Posterior vena cava (tissue), 2 donors: ENCODE measurements at regions of chr3 and their contacts with region 1.

Region 1: DNA sequence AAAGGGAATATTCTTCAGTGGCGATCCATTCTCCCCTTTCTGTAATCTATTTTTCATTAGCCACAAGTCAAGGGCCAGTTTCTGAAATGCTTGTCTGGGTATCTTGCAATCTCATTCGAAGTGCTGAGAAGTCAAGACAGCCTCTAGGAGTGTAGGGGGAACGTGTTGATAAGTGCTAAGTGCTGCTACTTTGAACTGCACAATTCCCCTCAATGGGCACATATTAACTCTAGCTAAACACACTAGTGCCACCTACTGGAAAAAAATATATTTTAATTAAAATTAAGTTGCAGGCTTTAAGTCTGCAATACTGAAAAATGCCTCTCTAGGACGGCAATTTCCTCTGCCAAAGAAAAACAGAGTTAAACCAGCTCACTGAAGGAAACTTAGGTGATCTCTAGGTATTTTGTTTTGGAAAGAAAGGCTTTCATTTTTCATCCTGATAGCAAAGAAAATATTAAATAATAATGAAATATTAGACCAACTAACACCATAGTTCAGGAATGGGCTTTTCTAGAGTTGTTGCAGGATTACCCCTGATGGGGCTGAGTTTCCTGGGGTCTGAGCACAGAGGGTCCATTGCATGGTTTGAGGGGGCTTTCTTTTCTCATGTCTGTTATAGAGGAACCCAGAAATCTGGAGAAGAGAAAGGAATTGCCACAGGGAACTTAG is 181.9 kb upstream of the KBTBD8 start:
- DNase-seq: no peak

Region 2: DNA sequence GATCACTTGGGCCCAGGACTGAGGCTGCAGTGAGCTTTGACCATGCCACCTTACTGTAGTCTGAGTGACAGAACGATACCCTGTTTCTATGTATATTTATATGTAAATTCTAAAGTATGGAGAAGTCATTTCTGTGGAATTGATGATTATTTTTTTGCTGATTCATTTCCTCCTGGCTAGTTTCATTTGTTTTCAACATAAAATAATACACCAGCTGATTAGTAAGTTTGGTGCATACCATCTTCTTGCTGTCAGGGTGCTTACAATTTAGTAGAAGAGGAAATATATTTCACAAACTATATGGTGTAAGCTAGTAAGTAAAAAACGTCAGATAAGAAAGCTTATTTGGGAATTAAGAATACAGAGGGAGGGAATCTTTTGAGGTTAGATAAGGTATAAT is 559.4 kb before region 1 on chr3:
- intact Hi-C with region 1: loop called in 1 of 2 experiments (anchors 5 kb)
- DNase-seq: no peak

Region 3: DNA sequence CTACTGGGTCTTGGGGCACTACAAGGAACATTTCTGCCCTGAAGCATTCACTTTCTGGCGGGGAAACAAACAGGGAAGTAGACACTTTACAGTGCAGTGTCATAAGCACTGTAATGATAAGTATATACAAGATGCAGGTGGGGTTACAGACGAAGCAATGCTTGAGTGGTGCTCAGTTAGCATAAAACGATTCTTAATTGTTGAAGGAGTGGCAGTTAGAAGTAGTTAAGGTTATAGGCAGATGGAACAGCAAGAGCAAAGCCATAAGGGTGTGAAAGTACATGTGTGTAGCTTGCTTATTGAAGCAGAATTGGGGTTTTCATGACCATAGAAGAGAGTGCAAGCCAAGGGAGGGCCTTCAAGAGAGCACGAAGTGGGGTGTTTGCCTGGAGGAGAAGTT is 549.2 kb before region 1 on chr3:
- intact Hi-C with region 1: loop called in 1 of 2 experiments (anchors 5 kb)
- DNase-seq: no peak

Region 4: DNA sequence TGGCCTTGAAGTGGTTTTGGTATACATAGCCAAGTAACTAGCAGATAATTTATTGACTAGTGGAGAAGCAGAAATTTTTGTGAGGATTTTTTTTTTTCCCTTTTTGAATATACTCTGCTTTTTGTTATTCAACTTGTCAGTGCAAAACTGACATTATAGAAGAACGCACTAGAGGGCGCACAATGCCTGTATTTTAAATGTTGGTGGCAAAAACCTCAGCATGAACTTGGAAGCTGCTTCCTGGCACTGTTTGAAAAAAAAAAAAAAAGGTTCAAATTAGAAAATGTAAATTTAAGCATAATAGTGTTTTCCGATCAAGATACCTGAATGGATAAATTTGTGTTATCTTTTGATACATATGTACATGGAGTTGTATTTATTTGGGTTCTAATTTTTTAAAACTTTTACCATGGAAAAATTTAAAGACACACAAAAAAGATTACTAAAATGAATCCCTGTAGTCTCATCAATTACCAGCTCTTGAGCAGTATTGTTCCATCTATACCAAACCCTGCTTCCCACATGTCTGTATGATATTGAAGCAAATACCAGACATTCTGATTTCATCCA is 539.4 kb before region 1 on chr3:
- intact Hi-C with region 1: loop called in 1 of 2 experiments (anchors 5 kb)
- DNase-seq: no peak

Region 5: GRCh38 chr3:66407611-66408218 is 408.5 kb before region 1 on chr3:
- intact Hi-C with region 1: loop called in 1 of 2 experiments (anchors 10 kb)
- DNase-seq: peak; percentile 88

Region 6: GRCh38 chr3:67145738-67146137 is 329.5 kb after region 1 on chr3:
- intact Hi-C with region 1: no loop called
- DNase-seq: no peak